B cell (primary cell): ENCODE measurements at regions of chr14 and their contacts with region 1.

Region 1: DNA sequence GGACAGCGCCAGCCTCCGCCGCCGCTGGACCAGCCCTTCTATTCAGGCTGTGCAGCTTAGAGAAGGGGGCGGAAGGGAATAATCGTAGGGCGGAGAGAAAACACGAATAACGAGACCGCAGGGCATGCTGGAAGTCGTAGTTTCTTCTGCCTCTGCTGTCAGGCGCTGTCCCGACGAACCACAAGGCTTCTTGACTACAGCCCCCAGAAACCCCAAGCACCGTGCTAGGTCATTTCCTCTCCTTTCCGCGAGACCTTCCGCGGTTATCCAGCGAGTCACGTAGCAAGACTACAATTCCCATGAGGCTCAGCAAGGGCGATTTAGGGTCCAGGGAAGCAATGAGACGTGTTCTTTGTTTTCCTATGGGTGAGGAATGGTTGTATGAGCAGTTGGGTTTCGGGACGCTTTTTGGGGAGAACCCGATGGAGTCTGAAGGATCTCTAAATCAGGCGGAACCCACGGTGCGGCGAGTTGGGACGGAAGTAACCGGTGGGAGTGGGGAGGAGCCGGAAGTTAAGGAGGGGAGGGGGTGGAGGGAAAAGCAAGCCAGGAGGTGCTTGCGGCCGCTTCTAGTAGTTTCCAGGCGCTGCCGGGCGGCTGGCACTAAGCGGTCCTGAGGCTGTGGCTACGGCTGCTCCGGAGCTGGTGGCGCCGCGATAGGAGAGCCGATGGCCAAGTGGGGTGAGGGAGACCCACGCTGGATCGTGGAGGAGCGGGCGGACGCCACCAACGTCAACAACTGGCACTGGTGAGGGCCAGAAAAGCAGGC is at the starts of genes AHSA1 and VIPAS39:
- DNase-seq: peak; percentile 98
- ATAC-seq: peak; percentile 91
- H3K4me3 ChIP-seq: peak within 1 kb of the TSS; percentile 72 to 99 (median 93)
- H3K4me3 Mint-ChIP-seq: peak within 1 kb of the TSS; percentile 100
- H3K27ac ChIP-seq: peak within 1 kb of the TSS; percentile 80 to 91
- H3K27ac Mint-ChIP-seq: peak within 1 kb of the TSS; percentile 99
- H3K4me1 ChIP-seq: peaks cover 21 to 24% of the 10 kb centered on the region in 2 donors
- H3K4me1 Mint-ChIP-seq: peaks cover 39% of the 10 kb centered on the region
- H3K27me3 ChIP-seq: no peaks in the 10 kb centered on the region
- H3K27me3 Mint-ChIP-seq: no peaks in the 10 kb centered on the region
- CTCF ChIP-seq: no peak
- total RNA-seq, gene AHSA1: 87.5 and 112 TPM in 2 replicates
- total RNA-seq, gene VIPAS39: 25.3 and 25.9 TPM in 2 replicates

Region 2: GRCh38 chr14:75875958-75876357 is 1581.7 kb before region 1 on chr14:
- CTCF ChIA-PET with region 1: no interaction called
- POLR2A ChIA-PET with region 1: no interaction called
- intact Hi-C with region 1: no loop called
- DNase-seq: no peak
- ATAC-seq: no peak
- H3K4me3 ChIP-seq: no peak overlapping the region
- H3K4me3 Mint-ChIP-seq: no peak overlapping the region
- H3K27ac ChIP-seq: no peak overlapping the region
- H3K27ac Mint-ChIP-seq: no peak overlapping the region
- H3K4me1 ChIP-seq: no peaks in the 10 kb centered on the region
- H3K4me1 Mint-ChIP-seq: no peaks in the 10 kb centered on the region
- H3K27me3 ChIP-seq: no peaks in the 10 kb centered on the region
- H3K27me3 Mint-ChIP-seq: no peaks in the 10 kb centered on the region
- CTCF ChIP-seq: no peak

Region 3: DNA sequence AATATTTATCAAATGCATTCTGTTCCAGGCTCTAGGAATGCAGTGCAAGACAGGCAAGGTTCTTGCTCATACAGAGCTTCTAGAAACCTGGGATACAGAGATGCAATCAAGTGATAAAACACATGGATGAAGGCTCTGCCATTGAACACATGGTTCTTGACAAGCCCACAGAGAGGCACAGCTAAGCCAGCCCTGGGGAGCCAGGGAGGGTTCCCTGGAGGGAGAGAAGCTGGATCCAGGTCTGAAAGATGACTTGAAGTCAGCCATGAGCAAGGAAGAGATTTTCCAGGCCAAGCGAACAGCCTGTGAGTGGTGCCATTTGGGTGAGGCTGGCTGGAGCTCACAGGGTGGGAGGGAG is 495.4 kb before region 1 on chr14:
- CTCF ChIA-PET with region 1: no interaction called
- POLR2A ChIA-PET with region 1: no interaction called
- intact Hi-C with region 1: loop called (anchors 5 kb)
- DNase-seq: no peak
- ATAC-seq: no peak
- H3K4me3 ChIP-seq: peak overlapping the region; percentile 22 to 57 (median 32)
- H3K4me3 Mint-ChIP-seq: peak overlapping the region; percentile 87
- H3K27ac ChIP-seq: peak overlapping the region; percentile 83 to 85
- H3K27ac Mint-ChIP-seq: peak overlapping the region; percentile 95
- H3K4me1 ChIP-seq: peaks cover 44 to 71% of the 10 kb centered on the region in 2 donors
- H3K4me1 Mint-ChIP-seq: peaks cover 72% of the 10 kb centered on the region
- H3K27me3 ChIP-seq: no peaks in the 10 kb centered on the region
- H3K27me3 Mint-ChIP-seq: no peaks in the 10 kb centered on the region
- CTCF ChIP-seq: no peak

Region 4: GRCh38 chr14:77314043-77314442 is 143.7 kb before region 1 on chr14:
- CTCF ChIA-PET with region 1: interaction called, 20 read pairs
- POLR2A ChIA-PET with region 1: no interaction called
- intact Hi-C with region 1: no loop called
- DNase-seq: no peak
- ATAC-seq: no peak
- H3K4me3 ChIP-seq: no peak overlapping the region
- H3K4me3 Mint-ChIP-seq: no peak overlapping the region
- H3K27ac ChIP-seq: no peak overlapping the region
- H3K27ac Mint-ChIP-seq: no peak overlapping the region
- H3K4me1 ChIP-seq: peaks cover 4 to 9% of the 10 kb centered on the region in 2 donors
- H3K4me1 Mint-ChIP-seq: peaks cover 4% of the 10 kb centered on the region
- H3K27me3 ChIP-seq: no peaks in the 10 kb centered on the region
- H3K27me3 Mint-ChIP-seq: no peaks in the 10 kb centered on the region
- CTCF ChIP-seq: no peak

Region 5: GRCh38 chr14:77554207-77554606 is 96.5 kb after region 1 on chr14:
- CTCF ChIA-PET with region 1: interaction called, 13 read pairs
- POLR2A ChIA-PET with region 1: no interaction called
- intact Hi-C with region 1: loop called (anchors 2 kb)
- DNase-seq: peak; percentile 37
- ATAC-seq: no peak
- H3K4me3 ChIP-seq: no peak overlapping the region
- H3K4me3 Mint-ChIP-seq: no peak overlapping the region
- H3K27ac ChIP-seq: peak overlapping the region; percentile 46 to 73
- H3K27ac Mint-ChIP-seq: no peak overlapping the region
- H3K4me1 ChIP-seq: peaks cover 19 to 36% of the 10 kb centered on the region in 2 donors
- H3K4me1 Mint-ChIP-seq: peaks cover 3% of the 10 kb centered on the region
- H3K27me3 ChIP-seq: no peaks in the 10 kb centered on the region
- H3K27me3 Mint-ChIP-seq: no peaks in the 10 kb centered on the region
- CTCF ChIP-seq: no peak

Region 6: DNA sequence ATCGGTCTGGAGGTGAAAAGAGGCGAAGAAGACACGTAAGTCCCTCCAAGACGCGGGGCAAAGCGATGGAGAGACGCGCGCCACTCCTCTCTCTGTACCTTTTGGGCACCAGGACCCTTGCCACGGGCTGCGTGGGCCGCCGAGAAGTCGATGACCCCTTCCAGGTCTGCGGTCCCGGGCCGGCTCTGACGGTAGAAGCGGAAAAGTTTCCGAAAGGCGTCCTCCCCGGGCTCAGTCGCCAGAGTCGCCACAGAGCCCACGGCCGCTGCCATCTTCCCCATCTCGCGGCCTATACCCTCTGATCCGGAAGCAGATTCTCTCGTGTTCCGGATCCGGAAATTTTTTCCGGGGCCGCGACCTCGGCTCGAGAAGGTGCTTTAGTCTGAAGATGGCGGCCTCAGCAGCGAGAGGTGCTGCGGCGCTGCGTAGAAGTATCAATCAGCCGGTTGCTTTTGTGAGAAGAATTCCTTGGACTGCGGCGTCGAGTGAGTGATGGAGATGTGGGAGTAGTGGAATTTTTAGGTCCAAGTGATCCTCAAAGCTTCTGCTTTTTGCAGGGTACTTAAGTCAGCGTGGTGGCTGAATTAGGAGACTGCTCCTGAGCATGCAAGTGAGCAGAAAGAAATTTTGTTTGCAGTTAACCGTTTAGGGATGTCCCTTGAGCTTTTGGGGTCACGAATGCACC is 250.2 kb after region 1 on chr14 and contains the starts of genes ALKBH1 and SLIRP:
- CTCF ChIA-PET with region 1: interaction called, 9 read pairs
- POLR2A ChIA-PET with region 1: no interaction called
- intact Hi-C with region 1: loop called (anchors 1 kb)
- DNase-seq: peak; percentile 91
- ATAC-seq: peak; percentile 97
- H3K4me3 ChIP-seq: peak within 1 kb of the TSS; percentile 82 to 98 (median 92)
- H3K4me3 Mint-ChIP-seq: peak within 1 kb of the TSS; percentile 94
- H3K27ac ChIP-seq: peak within 1 kb of the TSS in 1 of 2 donors; percentile 75
- H3K27ac Mint-ChIP-seq: peak within 1 kb of the TSS; percentile 91
- H3K4me1 ChIP-seq: peaks cover 22 to 32% of the 10 kb centered on the region in 2 donors
- H3K4me1 Mint-ChIP-seq: peaks cover 37% of the 10 kb centered on the region
- H3K27me3 ChIP-seq: no peaks in the 10 kb centered on the region
- H3K27me3 Mint-ChIP-seq: no peaks in the 10 kb centered on the region
- CTCF ChIP-seq: no peak
- total RNA-seq, gene ALKBH1: 19.0 and 21.8 TPM in 2 replicates
- total RNA-seq, gene SLIRP: 30.6 and 33.8 TPM in 2 replicates